Activated CD8-positive, alpha-beta T cell treated with anti-CD3 and anti-CD28 coated beads, Interleukin-2, amount 10 ng/mL, durations not matched to agents 7 days and 5 days (primary cell): ENCODE measurements at regions of chr16 and their contacts with region 1.

Region 1: GRCh38 chr16:56931892-56932720 is at the start of gene HERPUD1:
- DNase-seq: peak; percentile 99
- ATAC-seq: peak; percentile 94
- H3K4me3 Mint-ChIP-seq: peak within 1 kb of the TSS; percentile 99
- H3K27ac Mint-ChIP-seq: peak within 1 kb of the TSS; percentile 99
- H3K4me1 Mint-ChIP-seq: peaks cover 45% of the 10 kb centered on the region
- H3K27me3 Mint-ChIP-seq: peaks cover 5% of the 10 kb centered on the region
- total RNA-seq, gene HERPUD1: 88.2 to 95.2 TPM

Region 2: GRCh38 chr16:56860226-56861020 is 71.7 kb before region 1 on chr16:
- CTCF ChIA-PET with region 1: no interaction called
- POLR2A ChIA-PET with region 1: interaction called, 19 read pairs
- DNase-seq: peak; percentile 75
- ATAC-seq: peak; percentile 84
- H3K4me3 Mint-ChIP-seq: peak overlapping the region; percentile 63
- H3K27ac Mint-ChIP-seq: peak overlapping the region; percentile 93
- H3K4me1 Mint-ChIP-seq: peaks cover 56% of the 10 kb centered on the region
- H3K27me3 Mint-ChIP-seq: no peaks in the 10 kb centered on the region

Region 3: GRCh38 chr16:56866943-56867830 is 64.9 kb before region 1 on chr16:
- CTCF ChIA-PET with region 1: interaction called, 11 read pairs
- POLR2A ChIA-PET with region 1: interaction called, 19 read pairs
- DNase-seq: peak; percentile 70
- ATAC-seq: no peak
- H3K4me3 Mint-ChIP-seq: no peak overlapping the region
- H3K27ac Mint-ChIP-seq: no peak overlapping the region
- H3K4me1 Mint-ChIP-seq: peaks cover 30% of the 10 kb centered on the region
- H3K27me3 Mint-ChIP-seq: no peaks in the 10 kb centered on the region

Region 4: DNA sequence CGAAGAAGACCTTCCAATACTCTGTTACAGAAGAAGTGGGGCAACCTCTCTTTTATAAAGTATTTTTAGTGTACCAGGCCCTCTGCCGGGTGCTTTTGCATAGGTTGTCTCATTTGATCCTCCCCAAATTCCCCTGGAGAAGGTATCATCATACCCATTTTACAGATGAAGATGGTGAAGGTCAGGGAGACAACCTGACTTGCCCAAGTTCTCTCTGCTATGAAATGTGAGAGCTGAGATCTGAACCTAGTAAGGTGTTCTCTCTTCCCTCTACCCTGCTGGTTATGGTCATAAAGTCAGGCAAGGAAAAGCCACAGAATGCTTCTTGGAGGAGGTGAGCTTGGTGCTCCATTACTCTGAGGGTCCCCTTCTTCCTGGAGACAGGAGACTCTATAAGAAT is 28.2 kb before region 1 on chr16:
- CTCF ChIA-PET with region 1: no interaction called
- POLR2A ChIA-PET with region 1: interaction called, 10 read pairs
- DNase-seq: no peak
- ATAC-seq: no peak
- H3K4me3 Mint-ChIP-seq: no peak overlapping the region
- H3K27ac Mint-ChIP-seq: no peak overlapping the region
- H3K4me1 Mint-ChIP-seq: peaks cover 14% of the 10 kb centered on the region
- H3K27me3 Mint-ChIP-seq: peaks cover 18% of the 10 kb centered on the region

Region 5: DNA sequence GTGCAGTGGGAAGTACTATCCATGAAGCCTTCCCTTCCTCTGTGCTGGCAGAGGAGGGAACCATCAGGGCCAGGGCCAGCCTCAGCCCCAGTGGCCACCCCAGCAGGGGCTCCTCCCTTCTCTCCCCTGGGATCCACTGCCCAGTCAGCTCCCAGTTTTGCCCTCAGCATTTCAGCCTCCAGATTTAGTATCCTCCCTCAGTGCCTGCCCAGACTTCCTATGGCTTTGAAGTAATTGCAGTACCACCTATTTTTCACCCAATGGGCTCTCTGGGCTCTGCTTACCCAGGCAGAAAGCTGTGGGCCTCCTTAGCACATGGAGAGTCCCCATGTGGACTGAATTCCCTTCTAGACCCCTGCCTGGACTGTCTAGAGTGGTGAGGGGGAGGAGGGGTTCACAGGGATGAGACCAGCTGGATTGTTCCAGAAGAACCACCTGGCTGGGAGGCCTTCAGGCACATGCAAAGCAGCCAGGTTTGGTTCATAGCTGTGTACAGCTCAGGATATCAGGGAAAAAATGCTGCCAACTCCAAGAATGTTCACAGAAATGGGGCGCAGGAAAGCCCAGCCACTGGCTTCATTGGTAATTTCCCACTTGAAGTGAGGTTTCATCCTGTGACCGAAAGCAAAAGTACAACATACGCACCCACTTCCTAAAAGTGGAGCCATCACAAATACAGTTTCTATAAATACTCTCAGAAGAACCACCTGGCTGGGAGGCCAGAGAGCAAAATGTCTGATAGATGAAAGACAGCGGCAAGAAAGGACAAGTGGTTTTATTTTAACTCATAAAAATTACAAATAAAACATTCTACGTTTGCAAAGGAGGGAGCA is 15.3 kb before region 1 on chr16:
- CTCF ChIA-PET with region 1: interaction called, 3 read pairs
- POLR2A ChIA-PET with region 1: interaction called, 34 read pairs
- DNase-seq: peak; percentile 60
- ATAC-seq: peak; percentile 82
- H3K4me3 Mint-ChIP-seq: peak overlapping the region; percentile 43
- H3K27ac Mint-ChIP-seq: peak overlapping the region; percentile 81
- H3K4me1 Mint-ChIP-seq: peaks cover 39% of the 10 kb centered on the region
- H3K27me3 Mint-ChIP-seq: peaks cover 5% of the 10 kb centered on the region

Region 6: GRCh38 chr16:56944954-56945839 is 13.1 kb after region 1 on chr16:
- CTCF ChIA-PET with region 1: interaction called, 4 read pairs
- POLR2A ChIA-PET with region 1: interaction called, 67 read pairs
- DNase-seq: no peak
- ATAC-seq: no peak
- H3K4me3 Mint-ChIP-seq: no peak overlapping the region
- H3K27ac Mint-ChIP-seq: peak overlapping the region; percentile 11
- H3K4me1 Mint-ChIP-seq: peaks cover 21% of the 10 kb centered on the region
- H3K27me3 Mint-ChIP-seq: no peaks in the 10 kb centered on the region

Region 7: GRCh38 chr16:56950881-56951771 is 19.0 kb after region 1 on chr16:
- CTCF ChIA-PET with region 1: interaction called, 18 read pairs
- POLR2A ChIA-PET with region 1: interaction called, 67 read pairs
- DNase-seq: peak; percentile 75
- ATAC-seq: peak; percentile 82
- H3K4me3 Mint-ChIP-seq: no peak overlapping the region
- H3K27ac Mint-ChIP-seq: peak overlapping the region; percentile 18
- H3K4me1 Mint-ChIP-seq: peaks cover 16% of the 10 kb centered on the region
- H3K27me3 Mint-ChIP-seq: peaks cover under 1% of the 10 kb centered on the region

Region 8: DNA sequence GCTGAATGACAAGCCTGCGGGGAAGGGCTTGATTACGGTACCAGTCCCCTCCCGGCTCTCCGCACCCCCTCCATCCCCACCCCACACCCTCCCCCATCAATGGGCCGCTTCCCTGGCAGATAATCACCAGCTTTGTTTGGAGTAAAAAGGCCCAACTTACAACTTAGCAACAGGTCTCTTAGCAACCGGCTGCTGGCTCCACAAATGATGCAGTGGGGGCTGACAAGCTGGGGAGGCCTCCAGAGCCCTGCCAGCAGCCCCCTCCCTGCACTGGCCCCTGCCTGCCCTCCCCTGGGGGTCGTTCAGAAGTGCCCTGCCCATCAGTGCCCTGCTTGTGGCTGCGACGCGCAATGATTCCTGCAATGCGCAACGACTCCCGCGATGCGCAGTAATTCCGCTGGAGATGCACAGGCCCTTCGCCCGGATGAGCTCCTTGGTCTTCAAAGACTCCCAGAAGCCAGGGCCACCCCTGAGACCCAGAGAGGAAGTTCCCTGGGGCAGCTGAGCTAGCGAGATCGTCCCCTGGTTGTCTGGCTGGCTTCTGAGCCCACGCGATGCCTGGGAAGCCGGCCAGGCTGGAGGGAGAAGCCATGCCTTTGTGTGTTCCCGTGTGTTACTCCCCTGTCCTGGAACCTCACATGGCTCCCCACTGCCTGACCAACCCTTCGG is 183.5 kb after region 1 on chr16:
- CTCF ChIA-PET with region 1: no interaction called
- POLR2A ChIA-PET with region 1: no interaction called
- DNase-seq: no peak
- ATAC-seq: no peak
- H3K4me3 Mint-ChIP-seq: no peak overlapping the region
- H3K27ac Mint-ChIP-seq: no peak overlapping the region
- H3K4me1 Mint-ChIP-seq: peaks cover 2% of the 10 kb centered on the region
- H3K27me3 Mint-ChIP-seq: no peaks in the 10 kb centered on the region

Region 9: DNA sequence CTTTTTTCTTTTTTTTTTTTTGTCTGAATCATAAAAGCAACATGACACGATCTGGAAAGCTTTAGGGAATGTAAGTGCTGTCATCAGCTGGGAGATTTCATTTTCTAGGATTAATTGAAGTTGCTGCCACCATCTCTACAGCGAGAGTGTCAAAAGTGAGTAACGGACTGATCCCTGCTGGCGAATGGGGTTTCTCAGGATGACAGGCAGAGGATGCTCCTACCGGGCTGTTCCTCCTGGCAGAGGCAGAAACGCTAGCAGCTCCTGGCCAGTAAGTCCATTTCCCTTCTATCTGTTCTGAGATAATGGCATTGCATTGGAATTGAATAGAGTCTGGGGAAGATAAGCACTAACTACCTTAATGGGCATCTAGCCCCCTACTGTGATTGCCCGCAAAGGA is 950.7 kb after region 1 on chr16:
- CTCF ChIA-PET with region 1: no interaction called
- POLR2A ChIA-PET with region 1: no interaction called
- DNase-seq: no peak
- ATAC-seq: no peak
- H3K4me3 Mint-ChIP-seq: no peak overlapping the region
- H3K27ac Mint-ChIP-seq: no peak overlapping the region
- H3K4me1 Mint-ChIP-seq: no peaks in the 10 kb centered on the region
- H3K27me3 Mint-ChIP-seq: peaks cover 44% of the 10 kb centered on the region